Brain microvascular endothelial cell (primary cell): ENCODE measurements at regions of chr9 and their contacts with region 1.

Region 1: DNA sequence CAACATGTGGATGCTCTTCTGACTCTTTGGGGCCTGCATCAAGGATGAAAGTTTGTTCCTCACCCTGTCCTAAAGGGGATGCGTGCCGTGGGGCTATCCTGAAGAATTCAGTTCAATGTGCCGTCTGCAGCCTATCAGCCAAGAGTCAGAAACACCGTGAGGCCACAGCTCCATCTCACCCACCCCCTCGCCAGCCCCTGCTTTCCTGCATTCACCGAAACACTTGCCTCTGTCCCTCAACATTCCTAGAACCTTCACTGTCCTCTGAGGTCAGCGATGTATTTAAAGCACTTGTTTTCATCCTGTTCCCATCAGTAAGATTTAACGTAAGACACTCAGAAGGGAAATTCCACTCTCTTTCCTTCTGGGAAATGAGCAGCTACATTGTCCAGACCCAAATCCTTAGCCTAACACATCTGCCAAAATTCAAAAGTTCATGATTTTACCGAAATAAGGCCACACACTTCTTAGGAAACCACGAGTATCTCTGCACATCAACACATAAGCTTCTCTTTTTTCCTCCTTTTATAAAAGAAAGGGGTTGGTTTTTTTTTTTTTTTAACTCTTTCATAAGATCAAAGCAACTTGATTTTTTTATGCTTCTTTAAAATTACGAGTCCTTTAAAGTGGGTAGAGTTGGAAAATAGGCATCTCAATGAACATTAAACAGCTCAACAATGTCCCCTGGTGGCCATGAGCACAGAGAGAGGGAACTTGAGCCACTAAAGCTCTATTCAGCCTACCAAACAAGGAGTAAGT is 100.7 kb downstream of the SUSD1 start:
- DNase-seq: peak; percentile 95
- H3K4me3 ChIP-seq: no peak overlapping the region
- H3K27ac ChIP-seq: peak overlapping the region; percentile 100
- H3K27me3 ChIP-seq: no peaks in the 10 kb centered on the region
- CTCF ChIP-seq: peak; percentile 91

Region 2: DNA sequence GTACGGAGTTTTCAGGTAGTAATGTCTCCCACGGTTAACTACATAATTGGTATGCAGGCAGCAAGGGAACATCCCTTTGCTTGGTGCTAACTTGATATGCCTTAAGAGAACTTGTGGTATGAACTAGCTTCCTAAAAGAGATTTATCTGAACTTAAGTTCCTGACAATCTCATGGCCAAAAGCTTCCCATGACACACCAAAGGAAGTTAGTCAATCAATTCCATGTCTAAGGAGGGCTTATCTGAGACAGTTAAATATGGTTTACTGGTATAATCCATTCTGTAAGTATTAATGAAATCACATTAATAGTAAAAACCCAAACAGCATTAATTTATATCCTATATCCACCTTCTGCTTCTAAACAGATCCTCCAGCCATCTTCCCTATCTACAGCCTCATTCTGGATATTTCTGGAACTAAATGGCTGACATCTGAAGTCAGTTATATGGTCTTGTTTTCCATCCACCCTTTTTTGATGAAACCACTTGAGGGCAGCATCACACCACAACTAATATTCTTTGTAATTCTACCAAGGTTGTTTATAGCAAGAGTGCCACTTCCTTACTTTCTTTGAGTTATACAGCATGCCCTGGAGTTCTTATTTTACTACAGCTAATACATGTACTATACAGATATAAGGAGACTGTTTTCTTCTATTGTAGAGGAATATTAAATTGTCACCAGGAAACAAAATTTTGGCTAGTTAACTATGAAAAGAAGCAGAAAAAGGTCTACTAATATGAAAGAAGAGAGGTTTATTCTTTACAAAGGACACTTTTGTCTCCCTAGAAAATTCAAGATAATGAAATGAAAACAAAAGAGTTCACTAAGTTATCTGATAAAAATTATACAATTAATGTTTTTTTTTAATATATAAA is 314.4 kb before region 1 on chr9:
- in situ Hi-C with region 1: loop called (anchors 25 kb)
- DNase-seq: peak; percentile 91
- H3K4me3 ChIP-seq: no peak overlapping the region
- H3K27ac ChIP-seq: peak overlapping the region; percentile 74
- H3K27me3 ChIP-seq: no peaks in the 10 kb centered on the region
- CTCF ChIP-seq: peak; percentile 49